ENCODE measurements at regions of chr6 and their contacts with region 1.

Region 1: DNA sequence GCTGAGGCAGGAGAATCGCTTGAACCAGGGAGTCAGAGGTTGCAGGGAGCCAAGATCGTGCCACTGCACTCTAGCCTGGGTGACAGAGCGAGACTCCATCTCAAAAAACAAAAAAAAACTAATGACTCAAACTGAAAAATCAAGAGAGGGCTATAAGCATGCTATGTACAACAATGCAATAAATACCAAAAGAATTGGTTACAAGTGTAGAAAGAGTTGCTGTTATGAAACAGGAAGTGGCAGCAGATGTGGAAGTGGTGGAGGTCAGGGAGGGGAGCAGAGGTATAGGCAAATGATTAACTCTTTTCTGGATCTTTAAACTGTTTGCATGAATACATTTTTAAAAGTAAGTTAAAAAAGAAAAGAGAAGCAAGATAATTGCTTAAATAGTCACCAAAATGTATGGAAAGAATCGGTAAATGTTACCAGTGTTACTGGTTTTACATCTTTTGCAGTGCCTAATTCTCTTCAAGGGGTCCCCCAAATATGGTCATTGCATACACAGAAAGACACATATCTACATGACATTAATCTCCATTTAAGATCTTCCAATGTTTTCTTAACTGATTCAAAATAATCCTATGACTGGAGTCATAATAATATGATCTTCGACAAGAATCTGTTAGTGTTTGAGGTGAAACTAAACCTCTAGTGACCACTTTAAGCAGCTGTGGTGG is 15.0 kb downstream of the CALHM6 start:
- DNase-seq: peak in 5 of 9 donors; percentile 23 to 45 (median 28)
- ATAC-seq: peak; percentile 93
- H3K4me3 ChIP-seq: peak overlapping the region; percentile 45
- H3K4me3 Mint-ChIP-seq: peak overlapping the region in 8 of 10 donors; percentile 2 to 69 (median 56)
- H3K27ac ChIP-seq: no peak overlapping the region
- H3K27ac Mint-ChIP-seq: peak overlapping the region in 3 of 9 donors; percentile 15 to 80 (median 69)
- H3K4me1 ChIP-seq: peaks cover 4 to 17% of the 10 kb centered on the region in 2 donors
- H3K4me1 Mint-ChIP-seq: peaks cover 19 to 31% (median 24%) of the 10 kb centered on the region in 7 donors
- H3K27me3 ChIP-seq: no peaks in the 10 kb centered on the region
- H3K27me3 Mint-ChIP-seq: peaks cover 0 to 22% (median 2%) of the 10 kb centered on the region in 5 donors

Region 2: GRCh38 chr6:116461932-116462885 is 13.9 kb before region 1 on chr6:
- CTCF ChIA-PET with region 1: no interaction called
- POLR2A ChIA-PET with region 1: no interaction called
- intact Hi-C with region 1: loop called in 1 of 2 experiments (anchors 1 kb)
- DNase-seq: peak; percentile 25 to 71 (median 62)
- ATAC-seq: peak; percentile 89
- H3K4me3 ChIP-seq: peak overlapping the region; percentile 58
- H3K4me3 Mint-ChIP-seq: peak overlapping the region; percentile 76 to 87 (median 80)
- H3K27ac ChIP-seq: no peak overlapping the region
- H3K27ac Mint-ChIP-seq: peak overlapping the region in 7 of 9 donors; percentile 33 to 92 (median 76)
- H3K4me1 ChIP-seq: peaks cover 7 to 16% of the 10 kb centered on the region in 2 donors
- H3K4me1 Mint-ChIP-seq: peaks cover 17 to 88% (median 26%) of the 10 kb centered on the region in 7 donors
- H3K27me3 ChIP-seq: no peaks in the 10 kb centered on the region
- H3K27me3 Mint-ChIP-seq: peaks cover 0 to 39% (median 4%) of the 10 kb centered on the region in 5 donors

Measured in naive thymus-derived CD4-positive, alpha-beta T cell (primary cell).